Activated CD8-positive, alpha-beta T cell treated with anti-CD3 and anti-CD28 coated beads for 36 hours (primary cell): ENCODE measurements at regions of chr22 and their contacts with region 1.

Region 1: DNA sequence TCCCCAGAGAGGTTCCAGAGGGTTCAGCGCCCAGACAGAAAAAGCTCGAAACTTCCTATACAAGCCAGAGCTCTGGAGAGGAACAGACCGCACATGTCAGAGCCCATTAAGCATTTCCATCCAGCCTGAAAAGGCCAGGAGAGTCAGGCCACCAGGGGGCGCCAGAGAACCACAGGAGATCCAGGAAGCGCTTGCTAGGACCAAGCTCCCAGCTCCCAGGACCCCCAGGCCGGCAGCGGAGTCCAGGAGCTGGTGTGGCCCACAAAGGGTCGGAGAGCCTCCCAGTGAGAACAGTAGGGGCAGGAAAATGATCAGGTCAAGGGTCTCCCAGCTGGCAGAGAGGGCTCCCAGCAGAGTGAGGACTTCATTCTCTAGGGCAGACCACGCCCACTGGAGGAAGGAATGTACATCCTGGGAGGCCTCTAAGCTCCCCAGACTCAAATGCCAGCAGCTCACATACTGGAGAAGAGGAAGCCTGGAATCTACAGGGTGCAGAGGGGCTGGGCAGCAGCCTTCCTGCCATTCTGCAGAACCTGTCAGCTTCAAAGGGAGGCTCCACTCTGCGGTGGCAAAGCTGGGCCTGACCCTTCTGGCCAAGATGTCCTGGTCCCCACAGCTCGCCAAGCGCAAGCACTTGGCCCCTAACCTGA is 2.1 kb upstream of the MEI1 start:
- DNase-seq: peak; percentile 97
- ATAC-seq: peak; percentile 80
- H3K4me3 Mint-ChIP-seq: no peak overlapping the region
- H3K27ac Mint-ChIP-seq: peak overlapping the region; percentile 47
- H3K4me1 Mint-ChIP-seq: peaks cover 10% of the 10 kb centered on the region
- H3K27me3 Mint-ChIP-seq: no peaks in the 10 kb centered on the region
- CTCF ChIP-seq: peak; percentile 98

Region 2: DNA sequence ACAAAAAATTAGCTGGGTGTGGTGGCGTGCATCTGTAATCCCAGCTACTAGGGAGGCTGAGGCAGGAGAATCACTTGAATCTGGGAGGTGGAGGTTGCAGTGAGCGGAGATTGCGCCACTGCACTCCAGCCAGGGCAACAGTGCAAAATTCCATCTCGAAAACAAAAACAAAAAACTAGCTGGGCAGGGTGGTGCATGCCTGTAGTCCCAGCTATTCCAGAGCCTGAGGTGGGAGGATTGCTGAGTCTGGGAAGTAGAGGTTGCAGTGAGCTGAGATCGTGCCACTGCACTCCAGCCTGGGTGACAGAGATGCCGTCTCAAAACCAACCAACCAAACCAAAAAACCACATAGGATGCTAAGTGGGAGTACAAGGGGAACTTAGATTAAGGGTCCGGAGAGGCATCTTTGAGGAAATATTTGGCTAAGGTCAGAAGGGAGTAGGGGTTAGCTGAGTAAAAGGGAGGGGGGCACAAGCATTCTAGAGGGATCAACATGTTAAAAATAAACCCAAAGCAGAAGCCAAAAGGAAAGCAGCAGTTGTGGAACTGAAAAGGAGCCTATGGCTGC is 239.0 kb before region 1 on chr22:
- CTCF ChIA-PET with region 1: no interaction called
- POLR2A ChIA-PET with region 1: no interaction called
- intact Hi-C with region 1: no loop called
- DNase-seq: no peak
- ATAC-seq: no peak
- H3K4me3 Mint-ChIP-seq: no peak overlapping the region
- H3K27ac Mint-ChIP-seq: peak overlapping the region; percentile 54
- H3K4me1 Mint-ChIP-seq: peaks cover 6% of the 10 kb centered on the region
- H3K27me3 Mint-ChIP-seq: no peaks in the 10 kb centered on the region
- CTCF ChIP-seq: no peak

Region 3: DNA sequence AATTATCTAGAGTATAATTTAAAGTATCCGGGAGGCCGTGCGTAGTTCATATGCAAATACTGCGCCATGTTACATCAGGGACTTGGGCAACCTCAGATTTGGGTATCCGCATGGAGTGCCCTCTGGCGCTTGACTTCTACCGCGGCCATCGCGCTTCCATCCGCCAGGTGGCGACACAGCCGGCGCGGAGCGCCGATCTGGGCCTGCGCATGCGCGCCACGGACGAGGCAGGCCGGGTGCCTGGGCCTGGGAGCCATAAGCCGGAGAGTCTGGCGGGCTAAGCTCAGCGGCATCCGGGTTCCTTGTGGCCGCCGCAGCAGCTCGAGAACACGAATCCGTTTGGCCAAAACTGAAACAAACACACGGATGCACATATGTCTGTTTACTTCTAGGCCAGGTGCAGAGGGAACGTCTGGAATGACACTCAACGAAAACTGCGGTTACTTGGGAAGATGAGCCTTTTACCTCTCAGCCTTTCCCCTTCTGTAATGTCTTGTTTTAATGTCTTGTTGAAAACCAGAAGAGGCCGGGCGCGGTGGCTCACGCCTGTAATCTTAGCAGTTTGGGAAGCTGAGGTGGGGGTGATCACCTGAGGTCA is 30.5 kb before region 1 on chr22:
- CTCF ChIA-PET with region 1: interaction called, 29 read pairs
- POLR2A ChIA-PET with region 1: no interaction called
- intact Hi-C with region 1: no loop called
- DNase-seq: peak; percentile 91
- ATAC-seq: peak; percentile 96
- H3K4me3 Mint-ChIP-seq: peak overlapping the region; percentile 76
- H3K27ac Mint-ChIP-seq: peak overlapping the region; percentile 94
- H3K4me1 Mint-ChIP-seq: peaks cover 11% of the 10 kb centered on the region
- H3K27me3 Mint-ChIP-seq: no peaks in the 10 kb centered on the region
- CTCF ChIP-seq: peak; percentile 96

Region 4: GRCh38 chr22:41732096-41732772 is 35.0 kb after region 1 on chr22:
- CTCF ChIA-PET with region 1: interaction called, 18 read pairs
- POLR2A ChIA-PET with region 1: interaction called, 3 read pairs
- intact Hi-C with region 1: no loop called
- DNase-seq: no peak
- ATAC-seq: no peak
- H3K4me3 Mint-ChIP-seq: no peak overlapping the region
- H3K27ac Mint-ChIP-seq: no peak overlapping the region
- H3K4me1 Mint-ChIP-seq: no peaks in the 10 kb centered on the region
- H3K27me3 Mint-ChIP-seq: no peaks in the 10 kb centered on the region
- CTCF ChIP-seq: no peak

Region 5: GRCh38 chr22:41780746-41781505 is 83.7 kb after region 1 on chr22:
- CTCF ChIA-PET with region 1: interaction called, 56 read pairs
- POLR2A ChIA-PET with region 1: interaction called, 9 read pairs
- intact Hi-C with region 1: no loop called
- DNase-seq: peak; percentile 98
- ATAC-seq: peak; percentile 94
- H3K4me3 Mint-ChIP-seq: peak overlapping the region; percentile 81
- H3K27ac Mint-ChIP-seq: peak overlapping the region; percentile 99
- H3K4me1 Mint-ChIP-seq: peaks cover 39% of the 10 kb centered on the region
- H3K27me3 Mint-ChIP-seq: no peaks in the 10 kb centered on the region
- CTCF ChIP-seq: no peak

Region 6: GRCh38 chr22:41857155-41857859 is 160.1 kb after region 1 on chr22:
- CTCF ChIA-PET with region 1: interaction called, 10 read pairs
- POLR2A ChIA-PET with region 1: no interaction called
- intact Hi-C with region 1: no loop called
- DNase-seq: peak; percentile 91
- ATAC-seq: peak; percentile 73
- H3K4me3 Mint-ChIP-seq: peak overlapping the region; percentile 13
- H3K27ac Mint-ChIP-seq: peak overlapping the region; percentile 93
- H3K4me1 Mint-ChIP-seq: peaks cover 68% of the 10 kb centered on the region
- H3K27me3 Mint-ChIP-seq: no peaks in the 10 kb centered on the region
- CTCF ChIP-seq: peak; percentile 91

Region 7: GRCh38 chr22:41946629-41947423 is 249.6 kb after region 1 on chr22 and contains the start of gene CENPM:
- CTCF ChIA-PET with region 1: interaction called, 43 read pairs
- POLR2A ChIA-PET with region 1: no interaction called
- intact Hi-C with region 1: loop called (anchors 5 kb)
- DNase-seq: peak; percentile 98
- ATAC-seq: peak; percentile 97
- H3K4me3 Mint-ChIP-seq: peak within 1 kb of the TSS; percentile 88
- H3K27ac Mint-ChIP-seq: peak within 1 kb of the TSS; percentile 94
- H3K4me1 Mint-ChIP-seq: peaks cover 41% of the 10 kb centered on the region
- H3K27me3 Mint-ChIP-seq: no peaks in the 10 kb centered on the region
- CTCF ChIP-seq: peak; percentile 10
- total RNA-seq, gene CENPM: 62.5 to 63.1 TPM